BJ (cell line): ENCODE measurements at regions of chr9 and their contacts with region 1.

Region 1: DNA sequence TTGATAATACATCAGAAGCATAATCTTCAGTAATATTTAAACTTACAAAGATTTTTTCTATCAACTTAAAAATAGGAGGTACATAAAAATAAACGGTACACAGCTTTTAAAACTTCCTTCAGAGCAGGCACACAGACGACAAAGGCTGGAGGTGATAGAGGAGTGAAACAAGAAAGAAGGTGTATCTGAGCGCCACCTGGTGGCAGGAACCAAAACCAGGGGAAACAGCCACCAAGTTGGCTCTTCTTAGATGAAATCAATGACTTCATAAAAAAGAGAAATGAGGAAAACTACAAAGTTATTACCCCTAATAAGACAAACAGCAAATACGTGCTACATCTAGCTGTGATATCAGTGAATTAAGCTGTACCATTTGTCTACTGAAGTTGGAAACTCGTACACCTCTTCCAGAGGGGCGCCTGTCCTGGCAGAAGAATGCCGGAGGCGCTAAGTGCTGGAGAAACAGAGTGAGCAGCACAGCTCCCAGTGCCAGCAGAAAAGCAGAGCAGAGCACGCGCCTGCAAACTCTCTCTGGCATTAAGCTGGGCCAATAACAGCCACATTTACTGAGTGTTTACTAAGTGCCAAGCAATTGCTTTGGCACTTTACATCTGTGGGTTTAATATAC is 85.9 kb downstream of the SETX start:
- DNase-seq: no peak
- H3K4me3 ChIP-seq: no peak overlapping the region
- H3K27me3 ChIP-seq: no peaks in the 10 kb centered on the region
- CTCF ChIP-seq: peak; percentile 93

Region 2: GRCh38 chr9:132283863-132284262 is 15.0 kb after region 1 on chr9:
- CTCF ChIA-PET with region 1: interaction called, 17 read pairs
- POLR2A ChIA-PET with region 1: no interaction called
- DNase-seq: no peak
- H3K4me3 ChIP-seq: no peak overlapping the region
- H3K27me3 ChIP-seq: no peaks in the 10 kb centered on the region
- CTCF ChIP-seq: no peak

Region 3: DNA sequence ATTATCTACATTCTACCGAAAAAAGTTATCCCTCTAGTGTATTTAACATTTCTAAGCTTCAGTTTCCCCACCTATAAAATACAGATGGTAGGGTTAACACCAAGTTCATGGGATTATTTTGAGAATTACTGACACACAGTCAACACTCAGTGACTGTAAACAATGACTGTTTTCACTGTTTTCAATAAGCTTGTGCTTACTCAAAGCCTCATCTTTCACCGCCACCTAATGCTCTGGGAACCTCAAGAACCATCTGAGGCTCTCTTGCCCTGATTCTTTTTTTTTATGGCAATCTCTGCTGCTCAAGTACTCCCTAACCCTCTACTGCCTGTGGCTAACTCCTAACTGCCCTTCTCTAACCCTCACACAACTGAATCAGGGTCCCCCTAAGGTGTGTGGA is 26.3 kb after region 1 on chr9:
- CTCF ChIA-PET with region 1: interaction called, 11 read pairs
- POLR2A ChIA-PET with region 1: no interaction called
- DNase-seq: no peak
- H3K4me3 ChIP-seq: no peak overlapping the region
- H3K27me3 ChIP-seq: no peaks in the 10 kb centered on the region
- CTCF ChIP-seq: no peak